ENCODE measurements at regions of chr9 and their contacts with region 1.

Region 1: DNA sequence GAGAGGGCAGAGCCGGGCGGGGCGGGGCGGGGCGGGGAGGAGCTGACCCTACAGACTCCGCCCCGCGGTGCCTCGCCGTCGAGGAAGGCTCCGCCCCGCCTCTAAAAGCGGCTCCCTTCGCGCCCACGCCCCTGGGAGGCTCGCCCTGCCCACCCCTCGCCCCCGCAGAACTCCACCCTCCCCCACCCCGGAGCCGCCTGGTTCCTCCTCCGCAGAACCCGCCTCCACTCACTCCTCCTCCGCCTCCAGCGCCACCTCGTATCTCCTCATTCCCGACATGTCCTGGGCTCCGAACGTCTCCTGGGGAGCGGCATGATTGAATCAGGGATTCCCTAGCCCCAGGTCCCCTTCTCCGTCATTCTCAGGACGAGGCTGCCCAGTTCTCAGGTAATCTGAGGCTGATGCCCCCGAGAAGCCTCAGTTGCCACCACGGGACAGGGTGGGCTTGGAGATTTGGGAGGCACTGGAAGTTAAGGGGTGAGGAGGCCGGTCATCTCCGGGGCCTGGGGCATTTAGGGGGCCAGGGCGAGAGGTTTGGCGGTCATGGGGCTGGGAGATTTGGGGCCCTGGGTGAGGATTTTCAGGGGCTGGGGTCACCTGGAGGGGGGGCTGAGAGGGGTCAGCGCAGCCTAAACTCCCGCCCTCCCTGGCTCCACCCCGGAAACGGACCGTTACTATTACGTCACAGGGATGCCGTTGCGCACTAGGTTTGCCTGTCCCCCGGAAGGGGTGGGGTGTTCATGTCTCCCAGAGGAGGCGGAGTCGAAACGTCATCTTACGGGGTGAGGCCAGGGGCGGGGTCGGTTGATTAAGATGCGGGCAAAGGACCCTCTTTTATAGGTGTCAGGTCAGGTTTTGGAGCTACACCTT is 3.2 kb upstream of the CCL27 start:
- DNase-seq: no peak
- ATAC-seq: peak; percentile 92
- H3K4me3 ChIP-seq: peak overlapping the region; percentile 97
- H3K27ac ChIP-seq: peak overlapping the region; percentile 47
- H3K4me1 ChIP-seq: peaks cover 9% of the 10 kb centered on the region
- H3K27me3 ChIP-seq: no peaks in the 10 kb centered on the region
- CTCF ChIP-seq: no peak
- EP300 ChIP-seq: no peak
- POLR2A ChIP-seq: peak; percentile 54; the same call in 1 of the 2 replicates
- RAD21 ChIP-seq: no peak

Region 2: GRCh38 chr9:34651876-34652601 is 13.6 kb before region 1 on chr9 and contains the start of gene IL11RA:
- CTCF ChIA-PET with region 1: interaction called, 23 read pairs
- POLR2A ChIA-PET with region 1: interaction called, 3 read pairs
- RAD21 ChIA-PET with region 1: no interaction called
- SMC1A ChIA-PET with region 1: interaction called, 3 read pairs
- in situ Hi-C with region 1: no loop called
- intact Hi-C with region 1: no loop called
- DNase-seq: no peak
- ATAC-seq: peak; percentile 78
- H3K4me3 ChIP-seq: no peak within 1 kb of the TSS
- H3K27ac ChIP-seq: 0 out of 2 replicates have a peak within 1 kb of the TSS, but pooled peaks have one; percentile 31
- H3K4me1 ChIP-seq: peaks cover 15% of the 10 kb centered on the region
- H3K27me3 ChIP-seq: no peaks in the 10 kb centered on the region
- CTCF ChIP-seq: no peak
- EP300 ChIP-seq: no peak
- POLR2A ChIP-seq: peak; percentile 51; the same call in 1 of the 2 replicates
- RAD21 ChIP-seq: no peak
- polyA plus RNA-seq, gene IL11RA: 0.32 to 0.47 TPM

Region 3: GRCh38 chr9:35116898-35117551 is 451.4 kb after region 1 on chr9:
- CTCF ChIA-PET with region 1: no interaction called
- POLR2A ChIA-PET with region 1: no interaction called
- RAD21 ChIA-PET with region 1: no interaction called
- SMC1A ChIA-PET with region 1: no interaction called
- in situ Hi-C with region 1: no loop called
- intact Hi-C with region 1: no loop called
- DNase-seq: no peak
- ATAC-seq: peak; percentile 79
- H3K4me3 ChIP-seq: no peak overlapping the region
- H3K27ac ChIP-seq: no peak overlapping the region
- H3K4me1 ChIP-seq: peaks cover 24% of the 10 kb centered on the region
- H3K27me3 ChIP-seq: no peaks in the 10 kb centered on the region
- CTCF ChIP-seq: peak; percentile 93 to 98 (median 95); a peak in 5 of 6 replicates
- EP300 ChIP-seq: no peak
- POLR2A ChIP-seq: no peak
- RAD21 ChIP-seq: peak; percentile 92